ENCODE measurements at regions of chr11 and their contacts with region 1.

Region 1: GRCh38 chr11:33996498-33997454 is 54.8 kb upstream of the CAPRIN1 start:
- DNase-seq: no peak

Region 2: GRCh38 chr11:34174412-34175041 is 177.8 kb after region 1 on chr11:
- intact Hi-C with region 1: loop called (anchors 5 kb)
- DNase-seq: peak; percentile 89